Vagina (tissue), 2 donors: ENCODE measurements at regions of chr15 and their contacts with region 1.

Region 1: DNA sequence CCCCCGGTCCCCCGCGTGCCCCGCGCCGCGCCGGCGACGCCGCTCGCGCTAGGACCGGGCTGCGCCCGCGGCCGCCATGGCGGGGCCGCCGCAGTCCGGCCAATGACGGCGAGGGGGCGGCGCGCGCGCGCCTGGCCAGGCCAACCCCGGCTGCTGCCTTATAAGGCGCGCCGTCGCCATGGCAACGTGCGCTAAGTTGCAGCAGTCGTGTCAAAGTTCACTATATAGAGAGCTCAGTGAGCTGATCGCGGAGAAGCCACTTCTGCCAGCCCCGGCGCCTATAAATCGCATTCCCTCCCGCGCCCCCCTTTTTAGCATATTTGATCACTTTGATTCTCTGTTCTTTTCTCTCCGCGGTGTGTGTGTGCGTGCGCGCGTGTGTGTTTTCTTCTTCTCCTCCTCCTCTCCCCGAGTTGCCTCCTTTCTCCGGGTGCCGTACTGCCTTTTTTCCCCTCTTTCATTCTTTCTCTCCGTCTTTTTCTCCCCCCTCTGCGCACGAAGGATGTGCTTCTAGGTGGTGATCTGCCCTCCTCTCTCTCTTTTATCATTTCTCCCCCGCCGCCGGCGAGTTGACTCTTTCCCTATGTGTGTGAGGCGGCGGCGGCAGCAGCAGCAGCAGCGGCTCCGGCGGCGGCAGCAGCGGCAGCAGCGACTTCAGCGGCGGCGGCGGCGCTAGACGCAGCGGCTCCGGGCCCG is at the start of gene NR2F2:
- DNase-seq: peak in 1 of 2 donors; percentile 98
- H3K4me3 ChIP-seq: peak within 1 kb of the TSS; percentile 67 to 85
- H3K27ac ChIP-seq: peak within 1 kb of the TSS; percentile 99
- H3K4me1 ChIP-seq: peaks cover 12% of the 10 kb centered on the region
- H3K27me3 ChIP-seq: no peaks in the 10 kb centered on the region
- CTCF ChIP-seq: no peak
- POLR2A ChIP-seq: peak in 1 of 2 donors; percentile 90
- total RNA-seq, gene NR2F2: 39.8 TPM

Region 2: DNA sequence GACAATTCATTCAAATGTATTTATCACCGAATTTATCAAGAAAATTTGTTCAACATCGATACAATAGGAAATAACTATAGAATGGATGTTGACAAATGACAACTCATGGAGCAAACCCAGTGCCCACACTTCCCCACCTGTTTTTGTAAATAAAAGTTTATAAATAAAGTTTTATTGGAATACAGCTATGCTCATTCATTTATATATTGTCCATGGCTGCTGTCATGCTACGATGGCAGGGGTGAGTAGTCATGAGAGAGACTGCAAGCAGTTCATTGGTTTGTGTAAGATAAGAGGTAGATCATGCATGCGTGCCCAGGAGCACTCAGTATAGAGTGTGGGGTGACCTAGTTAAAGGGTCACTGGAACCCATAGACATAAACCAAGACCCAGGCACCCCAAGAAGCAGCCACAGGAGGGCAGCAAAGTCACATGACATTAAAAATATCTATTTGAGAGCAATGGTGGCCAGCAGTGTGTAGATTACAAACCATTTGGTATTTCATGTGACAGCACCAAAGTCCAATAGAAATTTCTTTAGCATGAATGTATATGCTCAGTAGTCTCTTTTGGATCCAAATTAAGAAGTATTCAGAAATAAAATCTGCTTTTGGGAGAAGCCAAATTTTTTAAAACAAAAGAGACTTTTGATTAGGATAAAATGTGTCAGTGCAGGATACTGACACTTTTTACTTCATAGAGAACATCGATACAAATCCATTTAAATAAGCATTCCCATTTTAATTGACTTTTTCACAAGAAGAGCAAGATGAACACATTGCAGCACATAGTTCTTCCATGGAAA is 1304.5 kb before region 1 on chr15:
- intact Hi-C with region 1: loop called (anchors 10 kb)
- DNase-seq: no peak
- H3K4me3 ChIP-seq: no peak overlapping the region
- H3K27ac ChIP-seq: no peak overlapping the region
- H3K4me1 ChIP-seq: no peaks in the 10 kb centered on the region
- H3K27me3 ChIP-seq: no peaks in the 10 kb centered on the region
- CTCF ChIP-seq: peak in 2 of 3 experiments; percentile 10 to 34
- POLR2A ChIP-seq: no peak

Region 3: DNA sequence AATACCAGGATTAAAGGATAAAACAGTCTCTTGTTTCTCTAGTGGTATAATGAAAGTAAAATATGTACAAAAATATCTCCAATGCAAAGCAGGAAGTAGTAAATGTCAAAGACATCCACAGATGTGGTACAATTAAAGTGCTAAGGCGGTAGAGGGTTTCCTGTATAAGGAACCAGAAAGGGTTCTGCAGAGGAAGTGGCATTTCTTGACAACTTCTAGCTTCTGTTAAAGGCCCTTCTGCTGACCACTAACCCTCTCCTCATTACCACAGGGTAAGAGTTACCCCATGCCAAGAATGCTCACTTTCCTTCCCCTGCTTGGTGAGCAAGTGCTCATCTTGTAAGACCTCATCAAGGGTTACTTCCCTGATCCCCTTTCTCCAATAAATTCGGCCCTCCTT is 883.7 kb before region 1 on chr15:
- intact Hi-C with region 1: loop called (anchors 10 kb)
- DNase-seq: no peak
- H3K4me3 ChIP-seq: no peak overlapping the region
- H3K27ac ChIP-seq: no peak overlapping the region
- H3K4me1 ChIP-seq: peaks cover 6% of the 10 kb centered on the region
- H3K27me3 ChIP-seq: no peaks in the 10 kb centered on the region
- CTCF ChIP-seq: no peak
- POLR2A ChIP-seq: no peak

Region 4: DNA sequence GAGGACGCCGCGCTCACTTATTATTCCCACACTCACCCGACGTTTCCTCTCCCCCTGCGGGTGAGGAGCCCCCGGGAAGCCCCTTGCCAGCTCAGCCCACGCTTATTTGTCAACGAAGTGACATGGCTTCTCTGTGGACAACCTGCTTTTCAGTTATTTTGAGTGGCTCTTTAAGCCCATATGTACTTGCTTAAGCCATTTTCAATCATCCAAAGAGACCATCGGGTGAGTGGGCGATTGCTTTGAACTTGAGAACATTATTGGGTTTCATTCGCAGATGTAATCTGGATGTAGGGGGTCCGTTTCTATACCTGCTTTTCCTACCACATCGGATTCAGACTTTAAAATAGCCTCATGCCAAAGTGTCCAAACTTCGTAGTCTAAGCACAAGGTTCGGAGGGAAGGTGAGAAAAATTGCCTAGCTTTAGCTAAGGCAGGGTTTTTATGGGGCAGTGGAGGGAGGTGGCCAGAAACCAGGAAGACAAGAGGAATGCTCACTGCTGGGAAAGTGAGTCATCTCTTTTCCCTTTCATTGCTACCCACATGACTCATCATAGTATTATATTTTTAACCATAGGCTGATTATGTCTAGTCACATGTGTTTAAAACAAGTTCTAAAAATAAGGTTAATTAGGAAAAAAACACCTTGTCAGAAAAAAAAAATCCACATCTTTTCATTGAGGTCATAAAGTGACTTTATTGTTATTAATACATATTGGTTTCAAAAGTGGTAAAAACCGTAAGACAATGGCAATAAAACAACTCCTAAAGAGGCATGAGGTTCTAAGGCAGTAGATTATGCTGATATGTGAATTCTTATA is 773.2 kb before region 1 on chr15:
- intact Hi-C with region 1: loop called (anchors 5 kb)
- DNase-seq: no peak
- H3K4me3 ChIP-seq: no peak overlapping the region
- H3K27ac ChIP-seq: peak overlapping the region; percentile 51
- H3K4me1 ChIP-seq: peaks cover 13% of the 10 kb centered on the region
- H3K27me3 ChIP-seq: no peaks in the 10 kb centered on the region
- CTCF ChIP-seq: no peak
- POLR2A ChIP-seq: no peak

Region 5: DNA sequence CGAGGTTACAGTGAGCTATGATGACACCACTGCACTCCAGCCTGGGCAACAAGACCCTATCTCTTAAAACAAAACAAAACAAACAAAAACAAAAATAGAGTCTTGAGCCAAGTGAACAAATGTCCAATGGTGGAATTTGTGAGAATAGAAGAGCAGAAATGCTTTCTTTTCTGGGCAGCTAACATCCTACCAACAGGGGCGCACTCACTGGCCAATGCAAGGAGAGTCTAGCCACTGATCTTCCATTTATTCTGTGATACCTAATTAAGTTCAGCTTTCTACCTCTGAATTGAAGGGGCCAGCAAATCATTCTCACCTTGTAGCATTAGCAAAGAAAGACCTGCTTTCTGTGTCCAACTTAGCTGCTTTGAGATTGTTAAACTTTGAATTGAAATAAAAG is 302.0 kb before region 1 on chr15:
- intact Hi-C with region 1: no loop called
- DNase-seq: no peak
- H3K4me3 ChIP-seq: no peak overlapping the region
- H3K27ac ChIP-seq: no peak overlapping the region
- H3K4me1 ChIP-seq: peaks cover 4% of the 10 kb centered on the region
- H3K27me3 ChIP-seq: no peaks in the 10 kb centered on the region
- CTCF ChIP-seq: no peak
- POLR2A ChIP-seq: no peak

Region 6: DNA sequence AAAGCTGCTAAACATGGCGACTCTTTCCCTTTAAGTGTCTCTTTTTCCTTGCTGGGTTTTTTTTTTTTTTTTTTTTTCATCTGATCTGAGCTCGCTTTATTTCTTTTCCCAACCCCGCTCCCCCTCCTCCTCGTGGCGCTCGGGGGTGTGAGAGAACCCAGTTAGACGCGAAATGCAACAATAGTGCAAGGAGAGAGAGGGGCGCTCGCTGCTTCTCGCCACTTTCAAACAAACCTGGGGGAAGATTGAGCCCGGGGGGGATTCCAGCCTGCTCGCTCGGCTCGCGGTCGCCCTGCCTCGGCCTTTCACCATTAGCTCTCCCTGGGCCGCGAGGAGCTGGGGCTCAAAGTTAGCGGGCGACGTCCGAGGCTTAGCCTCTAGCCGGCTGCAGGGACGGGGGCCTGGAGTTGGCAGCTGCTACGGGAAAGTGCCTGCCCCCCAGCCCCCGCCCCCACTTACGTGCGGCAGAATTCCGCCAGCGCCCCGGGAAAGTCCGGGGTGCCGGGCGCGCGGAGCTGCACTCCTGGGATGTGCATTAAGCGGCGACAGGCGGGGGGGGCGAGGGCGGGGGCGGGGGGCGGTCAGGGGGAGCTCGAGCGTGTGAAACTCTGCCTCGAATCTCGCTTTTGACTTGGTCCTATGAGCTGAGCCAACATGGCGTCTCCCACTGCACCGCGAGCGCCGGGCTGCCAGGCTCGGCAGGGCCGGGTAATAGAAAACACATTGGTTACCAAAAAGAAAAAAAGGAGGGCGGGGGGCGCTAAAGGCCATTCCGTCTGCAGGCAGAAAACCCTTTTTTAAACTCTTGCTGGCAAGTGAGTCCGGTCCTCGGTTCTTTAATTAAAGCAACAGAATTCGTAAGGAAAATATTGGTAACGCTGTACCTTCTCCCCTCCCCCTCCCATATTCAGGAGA is 10.3 kb after region 1 on chr15:
- intact Hi-C with region 1: loop called (anchors 1 kb)
- DNase-seq: peak; percentile 67 to 82
- H3K4me3 ChIP-seq: peak overlapping the region; percentile 67 to 85
- H3K27ac ChIP-seq: peak overlapping the region; percentile 99
- H3K4me1 ChIP-seq: peaks cover 21% of the 10 kb centered on the region
- H3K27me3 ChIP-seq: no peaks in the 10 kb centered on the region
- CTCF ChIP-seq: no peak
- POLR2A ChIP-seq: no peak